HepG2 (cell line): ENCODE measurements at regions of chr17 and their contacts with region 1.

Region 1: DNA sequence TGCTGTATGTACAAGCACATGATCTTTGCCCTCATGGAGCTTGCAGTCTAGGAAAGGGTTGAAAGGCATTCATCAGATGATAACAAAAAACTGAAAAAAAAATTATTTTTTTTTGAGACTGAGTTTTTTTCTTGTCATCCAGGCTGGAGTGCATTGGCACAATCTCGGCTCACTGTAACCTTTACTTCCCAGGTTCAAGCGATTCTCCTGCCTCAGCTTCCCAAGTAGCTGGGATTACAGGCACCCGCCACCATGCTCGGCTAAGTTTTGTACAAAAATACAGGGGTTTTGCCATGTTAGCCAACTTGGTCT is 38.7 kb upstream of the BCAS3 start:
- DNase-seq: no peak
- ATAC-seq: no peak
- H3K4me3 ChIP-seq: no peak overlapping the region
- H3K27ac ChIP-seq: no peak overlapping the region
- H3K4me1 ChIP-seq: 0 out of 2 replicates have a peak, but pooled peaks cover 8% of the 10 kb centered on the region
- H3K27me3 ChIP-seq: no peaks in the 10 kb centered on the region
- CTCF ChIP-seq: no peak
- EP300 ChIP-seq: no peak
- POLR2A ChIP-seq: no peak
- RAD21 ChIP-seq: no peak

Region 2: GRCh38 chr17:60421273-60421934 is 217.6 kb before region 1 on chr17:
- CTCF ChIA-PET with region 1: interaction called, 5 read pairs
- POLR2A ChIA-PET with region 1: no interaction called
- in situ Hi-C with region 1: no loop called
- intact Hi-C with region 1: loop called (anchors 2 kb)
- DNase-seq: peak; percentile 42
- ATAC-seq: peak; percentile 97
- H3K4me3 ChIP-seq: peak overlapping the region; percentile 14 to 52 (median 27)
- H3K27ac ChIP-seq: no peak overlapping the region
- H3K4me1 ChIP-seq: peaks cover 12% of the 10 kb centered on the region; the same call in 1 of the 2 replicates
- H3K27me3 ChIP-seq: peaks cover 4 to 15% of the 10 kb centered on the region in 2 experiments; a peak in 4 of 5 replicates
- CTCF ChIP-seq: peak; percentile 93
- EP300 ChIP-seq: no peak
- POLR2A ChIP-seq: no peak
- RAD21 ChIP-seq: peak; percentile 84

Region 3: DNA sequence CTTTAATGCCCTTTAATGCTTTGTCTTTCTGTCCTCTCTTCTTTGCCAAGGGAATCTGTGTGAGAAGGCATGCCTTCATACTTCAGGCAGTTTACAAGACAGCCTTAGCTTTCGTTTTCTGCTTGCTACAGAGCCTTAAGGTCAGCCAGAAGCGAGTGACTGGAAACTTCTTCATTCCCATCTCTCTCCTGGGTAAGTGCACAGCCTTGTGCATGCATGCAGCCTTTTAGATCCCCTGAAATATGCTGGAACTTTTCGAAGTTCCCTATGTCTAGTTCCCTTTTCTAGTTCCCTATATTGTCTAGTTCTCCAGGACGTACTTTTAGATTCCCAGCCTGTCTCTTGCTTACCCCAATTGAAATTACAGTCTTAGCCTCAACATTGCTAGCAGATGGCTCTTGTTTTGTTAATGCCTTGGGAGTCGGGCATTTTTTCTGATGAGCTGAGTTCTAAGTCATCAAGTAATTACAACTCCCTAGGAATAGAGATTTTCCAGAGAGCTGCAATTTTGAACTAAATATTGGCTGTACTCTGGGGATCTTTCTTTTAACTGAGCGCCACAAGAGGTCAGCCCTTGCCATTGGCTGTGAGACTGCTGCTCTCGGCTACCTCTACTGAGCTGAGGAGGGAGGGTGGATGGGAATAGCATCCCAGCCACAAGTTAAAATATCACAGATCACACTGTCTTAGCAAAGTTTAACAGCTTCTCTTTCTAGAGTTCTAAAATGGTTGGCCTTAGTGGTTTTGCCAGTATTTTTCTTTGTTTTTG is 61.6 kb before region 1 on chr17:
- CTCF ChIA-PET with region 1: interaction called, 3 read pairs
- POLR2A ChIA-PET with region 1: no interaction called
- in situ Hi-C with region 1: no loop called
- intact Hi-C with region 1: loop called (anchors 1 kb)
- DNase-seq: peak; percentile 17
- ATAC-seq: peak; percentile 95
- H3K4me3 ChIP-seq: peak overlapping the region; percentile 29 to 46 (median 39); a peak in 5 of 6 replicates
- H3K27ac ChIP-seq: peak overlapping the region; percentile 21
- H3K4me1 ChIP-seq: no peaks in the 10 kb centered on the region
- H3K27me3 ChIP-seq: no peaks in the 10 kb centered on the region
- CTCF ChIP-seq: peak; percentile 61
- EP300 ChIP-seq: no peak
- POLR2A ChIP-seq: no peak
- RAD21 ChIP-seq: no peak

Region 4: DNA sequence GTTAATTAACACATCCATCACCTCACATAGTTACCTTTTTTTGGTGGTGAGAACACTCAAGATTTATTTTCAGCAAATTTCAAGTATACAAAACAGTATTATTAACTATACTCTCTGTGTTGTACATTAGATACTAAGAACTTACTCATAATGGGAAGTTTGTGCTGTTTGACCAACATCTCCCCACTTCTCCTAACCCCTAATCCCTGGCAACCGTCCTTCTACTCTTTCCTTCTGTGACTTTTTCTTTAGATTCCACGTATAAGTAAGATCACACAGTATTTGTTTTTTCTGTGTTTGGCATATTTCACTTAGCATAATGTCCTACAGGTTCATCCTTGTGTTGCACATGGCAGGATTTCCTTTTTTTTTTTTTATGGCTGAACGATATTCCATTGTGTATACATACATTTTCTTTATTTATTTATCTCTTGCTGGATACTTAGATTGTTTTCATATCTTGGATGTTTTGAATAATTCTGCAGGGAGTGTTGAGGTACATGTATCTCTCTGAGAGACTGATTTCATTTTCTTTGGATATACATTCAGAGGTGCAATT is 20.0 kb before region 1 on chr17:
- CTCF ChIA-PET with region 1: no interaction called
- POLR2A ChIA-PET with region 1: no interaction called
- in situ Hi-C with region 1: no loop called
- intact Hi-C with region 1: no loop called
- DNase-seq: no peak
- ATAC-seq: no peak
- H3K4me3 ChIP-seq: no peak overlapping the region
- H3K27ac ChIP-seq: no peak overlapping the region
- H3K4me1 ChIP-seq: no peaks in the 10 kb centered on the region
- H3K27me3 ChIP-seq: no peaks in the 10 kb centered on the region
- CTCF ChIP-seq: no peak
- EP300 ChIP-seq: no peak
- POLR2A ChIP-seq: no peak
- RAD21 ChIP-seq: no peak